Cardiac septum (tissue), 1 donor: ENCODE measurements at regions of chr13 and their contacts with region 1.

Region 1: DNA sequence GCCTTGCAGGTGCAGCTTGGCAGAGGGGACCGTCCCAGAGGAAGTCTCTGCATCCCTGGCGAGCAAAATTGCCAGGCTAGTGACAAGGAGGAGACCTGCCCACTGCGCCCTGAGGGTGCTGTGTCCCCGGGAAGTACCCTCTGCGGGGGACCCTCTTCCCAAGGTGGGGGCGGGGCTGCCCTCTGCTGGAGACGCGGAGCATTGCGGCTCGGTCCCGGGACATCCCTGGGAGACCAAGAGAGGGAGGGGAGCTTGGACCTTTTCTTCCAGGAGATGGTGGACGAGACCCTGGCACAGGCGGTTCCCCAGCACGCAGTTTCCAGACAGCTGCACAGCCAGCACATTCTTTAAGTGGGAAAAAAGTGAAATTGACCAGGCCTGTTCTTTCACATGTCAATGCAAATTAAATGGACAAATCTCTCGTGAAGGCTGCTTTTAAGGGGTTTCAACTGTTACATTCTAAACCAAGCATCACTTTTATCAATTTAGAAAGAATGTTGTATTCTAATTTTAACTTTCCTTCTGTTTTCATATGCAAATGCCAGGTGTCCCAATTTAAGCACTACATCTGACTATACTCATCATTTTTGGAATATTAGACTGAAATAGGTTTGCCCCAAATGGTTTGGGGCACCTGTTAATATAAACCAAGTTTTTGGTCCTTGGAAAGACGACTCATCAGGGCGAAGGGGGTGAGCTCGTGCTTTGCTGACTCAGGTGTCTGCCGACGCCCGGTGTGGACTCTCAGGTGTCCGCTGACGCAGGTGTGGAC is 60.7 kb downstream of the MCF2L start:
- DNase-seq: no peak

Region 2: GRCh38 chr13:112657850-112658444 is 371.7 kb before region 1 on chr13:
- intact Hi-C with region 1: no loop called
- DNase-seq: no peak

Region 3: GRCh38 chr13:112942689-112943308 is 86.9 kb before region 1 on chr13:
- intact Hi-C with region 1: loop called (anchors 2 kb)
- DNase-seq: peak; percentile 97